Heart left ventricle (tissue), 16 donors: ENCODE measurements at regions of chr18 and their contacts with region 1.

Region 1: GRCh38 chr18:23619388-23619881 is 33.1 kb upstream of the NPC1 start:
- DNase-seq: peak in 4 of 5 donors; percentile 19 to 66 (median 36)
- ATAC-seq: peak; percentile 40 to 76 (median 69)
- H3K4me3 ChIP-seq: peak overlapping the region; percentile 16 to 66 (median 48)
- H3K27ac ChIP-seq: peak overlapping the region in 2 of 12 donors; percentile 36 to 39
- H3K4me1 ChIP-seq: peaks cover 0 to 15% (median 4%) of the 10 kb centered on the region in 12 donors
- H3K27me3 ChIP-seq: peaks cover 0 to 30% (median 0%) of the 10 kb centered on the region in 9 donors
- CTCF ChIP-seq: peak in 1 of 12 donors; percentile 26
- POLR2A ChIP-seq: no peak

Region 2: DNA sequence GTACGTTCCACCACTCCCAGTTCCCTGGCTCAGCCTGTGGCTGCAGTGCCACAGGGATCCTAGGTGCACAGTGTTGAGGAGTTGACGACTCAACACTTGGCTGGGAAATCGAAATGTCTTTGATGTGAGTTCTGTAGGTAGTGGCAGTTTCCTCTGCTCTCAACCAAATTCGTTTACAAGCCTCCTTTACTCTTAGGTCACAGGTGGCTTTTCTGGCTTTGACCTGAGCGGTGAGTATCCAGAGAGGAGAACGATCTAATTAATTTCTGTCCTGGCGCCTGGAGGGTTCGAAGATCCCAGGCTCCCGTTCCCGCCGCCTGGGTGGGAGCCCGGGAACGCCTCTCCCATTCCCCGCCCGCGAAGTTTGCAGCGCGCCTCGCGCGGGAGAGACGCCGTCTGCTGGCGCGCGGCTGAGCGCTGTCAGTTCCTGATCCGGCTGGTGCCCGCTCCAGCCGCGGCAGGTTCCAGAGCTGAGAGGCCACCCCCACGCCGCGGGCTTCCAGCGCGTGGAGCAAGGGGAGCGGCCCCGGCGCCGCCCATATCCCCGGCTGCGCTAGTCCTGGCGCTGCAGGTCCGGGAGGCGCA is 69.7 kb after region 1 on chr18 and contains the start of gene LAMA3:
- intact Hi-C with region 1: loop called in 1 of 10 experiments (anchors 5 kb)
- DNase-seq: peak; percentile 63 to 80 (median 68)
- ATAC-seq: peak; percentile 74 to 93 (median 91)
- H3K4me3 ChIP-seq: peak within 1 kb of the TSS; percentile 39 to 86 (median 71)
- H3K27ac ChIP-seq: peak within 1 kb of the TSS in 7 of 12 donors; percentile 15 to 68 (median 53)
- H3K4me1 ChIP-seq: peaks cover 0 to 24% (median 10%) of the 10 kb centered on the region in 12 donors
- H3K27me3 ChIP-seq: peaks cover 0 to 46% (median 0%) of the 10 kb centered on the region in 9 donors
- CTCF ChIP-seq: peak in 9 of 12 donors; percentile 11 to 59 (median 32)
- POLR2A ChIP-seq: peak in 1 of 2 donors; percentile 16
- total RNA-seq, gene LAMA3: 1.8 to 6.6 (median 3.3) TPM

Region 3: GRCh38 chr18:23703057-23703986 is 83.9 kb after region 1 on chr18:
- intact Hi-C with region 1: loop called (anchors 1 to 5 kb)
- DNase-seq: peak in 1 of 5 donors; percentile 28
- ATAC-seq: peak; percentile 50 to 89 (median 77)
- H3K4me3 ChIP-seq: no peak overlapping the region
- H3K27ac ChIP-seq: peak overlapping the region in 2 of 12 donors; percentile 26 to 55
- H3K4me1 ChIP-seq: peaks cover 0 to 9% (median 0%) of the 10 kb centered on the region in 12 donors
- H3K27me3 ChIP-seq: no peaks in the 10 kb centered on the region
- CTCF ChIP-seq: peak; percentile 38 to 74 (median 56)
- POLR2A ChIP-seq: no peak

Region 4: DNA sequence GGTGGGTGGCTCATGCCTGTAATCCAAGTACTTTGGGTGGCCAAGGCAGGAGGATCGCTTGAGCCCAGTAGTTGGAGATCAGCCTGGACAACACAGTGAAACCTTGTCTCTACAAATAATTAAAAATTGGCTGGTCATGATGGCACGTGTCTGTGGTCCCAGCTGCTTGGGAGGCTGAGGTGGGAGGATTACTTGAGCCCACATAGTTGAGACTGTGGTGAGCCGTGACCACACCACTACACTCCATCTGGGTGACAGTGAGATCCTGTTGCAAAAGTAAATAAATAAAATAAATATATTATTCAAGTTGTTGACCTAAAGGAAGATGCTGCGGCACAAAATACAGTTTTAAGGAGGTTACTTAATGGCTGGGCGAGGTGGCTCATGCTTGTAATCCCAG is 142.5 kb after region 1 on chr18:
- intact Hi-C with region 1: no loop called
- DNase-seq: no peak
- ATAC-seq: no peak
- H3K4me3 ChIP-seq: no peak overlapping the region
- H3K27ac ChIP-seq: no peak overlapping the region
- H3K4me1 ChIP-seq: no peaks in the 10 kb centered on the region
- H3K27me3 ChIP-seq: no peaks in the 10 kb centered on the region
- CTCF ChIP-seq: no peak
- POLR2A ChIP-seq: no peak

Region 5: DNA sequence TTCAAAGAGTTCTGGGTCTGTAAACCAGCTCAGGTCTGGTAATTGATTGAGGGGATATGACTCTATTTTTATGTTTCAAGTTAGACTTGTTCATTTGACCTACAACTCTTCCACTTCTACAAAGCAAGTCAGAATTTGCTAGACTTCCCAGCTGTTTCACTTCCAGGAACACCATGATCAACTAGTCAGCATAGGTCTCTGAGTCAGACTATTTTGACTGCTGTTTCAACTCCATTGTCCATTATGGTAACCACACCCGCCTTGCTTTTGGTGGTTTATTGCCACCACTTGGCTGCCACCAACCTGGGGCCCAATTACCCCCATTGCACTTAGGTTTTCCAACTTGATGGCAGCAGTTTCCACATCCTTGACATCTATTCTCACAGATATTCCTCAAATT is 186.5 kb after region 1 on chr18:
- intact Hi-C with region 1: loop called in 7 of 10 experiments (anchors 2 to 5 kb)
- DNase-seq: no peak
- ATAC-seq: no peak
- H3K4me3 ChIP-seq: no peak overlapping the region
- H3K27ac ChIP-seq: no peak overlapping the region
- H3K4me1 ChIP-seq: no peaks in the 10 kb centered on the region
- H3K27me3 ChIP-seq: no peaks in the 10 kb centered on the region
- CTCF ChIP-seq: no peak
- POLR2A ChIP-seq: no peak